A549 (cell line): ENCODE measurements at regions of chr1 and their contacts with region 1.

Region 1: GRCh38 chr1:231357831-231358354 is 19.8 kb downstream of the SPRTN start:
- DNase-seq: peak; percentile 52 to 73
- ATAC-seq: peak; percentile 85 to 86
- H3K4me3 ChIP-seq: no peak overlapping the region
- H3K27ac ChIP-seq: peak overlapping the region; percentile 37 to 69; a peak in 5 of 6 replicates
- H3K4me1 ChIP-seq: peaks cover 38% of the 10 kb centered on the region
- CTCF ChIP-seq: peak; percentile 92
- EP300 ChIP-seq: no peak
- POLR2A ChIP-seq: no peak
- RAD21 ChIP-seq: peak; percentile 95 to 96

Region 2: GRCh38 chr1:231134624-231135023 is 223.3 kb before region 1 on chr1:
- CTCF ChIA-PET with region 1: no interaction called
- POLR2A ChIA-PET with region 1: no interaction called
- DNase-seq: peak in 1 of 2 experiments; percentile 27
- ATAC-seq: no peak
- H3K4me3 ChIP-seq: no peak overlapping the region
- H3K27ac ChIP-seq: peak overlapping the region; percentile 46 to 67; a peak in 5 of 6 replicates
- H3K4me1 ChIP-seq: peaks cover 29% of the 10 kb centered on the region
- CTCF ChIP-seq: no peak
- EP300 ChIP-seq: no peak
- POLR2A ChIP-seq: no peak
- RAD21 ChIP-seq: no peak

Region 3: DNA sequence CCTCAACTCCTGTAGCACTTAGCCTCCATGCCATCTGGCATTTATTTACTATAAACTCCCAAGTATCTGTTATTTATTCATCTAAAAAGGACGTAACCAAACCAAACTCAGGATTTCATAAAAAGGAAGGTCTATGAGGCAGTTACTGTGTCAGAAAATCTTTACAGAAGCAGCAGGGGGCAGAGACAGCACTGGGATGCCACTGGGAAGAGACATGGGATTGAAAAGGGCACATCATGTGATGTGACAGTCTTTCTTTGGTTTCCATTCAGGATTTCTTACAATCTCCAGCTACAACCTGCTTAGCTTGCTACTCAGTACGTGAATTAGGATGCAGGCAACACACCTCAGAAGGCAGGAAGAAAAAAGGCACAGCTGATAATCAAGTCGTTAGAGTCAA is 11.4 kb after region 1 on chr1:
- CTCF ChIA-PET with region 1: interaction called, 18 read pairs
- POLR2A ChIA-PET with region 1: no interaction called
- DNase-seq: no peak
- ATAC-seq: peak in 1 of 2 experiments; percentile 67; a peak in 3 of 6 replicates
- H3K4me3 ChIP-seq: no peak overlapping the region
- H3K27ac ChIP-seq: no peak overlapping the region
- H3K4me1 ChIP-seq: peaks cover 15% of the 10 kb centered on the region; the same call in 2 of the 3 replicates
- CTCF ChIP-seq: no peak
- EP300 ChIP-seq: no peak
- POLR2A ChIP-seq: no peak
- RAD21 ChIP-seq: peak; percentile 48 to 50; a peak in 4 of 5 replicates

Region 4: DNA sequence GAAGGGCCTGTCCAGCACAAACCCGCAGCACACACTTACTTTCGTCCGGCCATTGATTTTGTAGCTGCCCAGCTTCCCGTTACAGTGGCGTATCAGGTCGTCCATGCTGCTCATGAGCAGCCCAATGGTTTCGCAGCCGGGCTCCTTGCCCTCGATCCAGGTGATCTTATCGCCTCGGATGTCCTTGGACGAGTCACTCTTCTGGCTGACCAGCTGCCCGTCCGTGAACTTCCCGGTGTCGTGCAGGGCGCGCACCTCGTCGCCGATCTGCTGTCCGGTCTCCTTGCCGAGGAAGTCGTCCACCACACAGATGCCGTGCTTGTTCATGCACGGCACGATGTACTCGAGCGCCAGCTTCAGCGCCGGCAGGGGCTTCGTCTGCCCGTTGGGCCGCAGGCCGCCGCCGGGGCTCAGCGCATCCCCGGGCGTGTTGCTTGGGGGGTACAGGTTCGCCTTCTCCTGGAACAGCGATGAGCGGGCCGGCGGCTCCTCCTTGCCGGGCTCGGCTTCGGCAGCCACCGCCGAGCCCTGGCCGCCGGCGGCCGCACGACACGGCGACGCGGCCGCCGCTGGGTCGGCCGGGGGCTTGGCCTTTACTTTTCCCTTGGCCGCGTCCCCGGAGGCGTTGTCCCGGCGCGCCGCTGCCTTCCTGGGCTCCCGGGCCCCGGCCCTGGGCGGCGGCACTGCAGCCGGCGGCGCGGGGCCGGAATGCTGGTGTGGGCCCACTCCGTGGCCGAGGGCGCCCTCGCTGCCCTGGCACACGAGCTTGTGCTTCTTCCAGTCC is 63.3 kb after region 1 on chr1:
- CTCF ChIA-PET with region 1: interaction called, 14 read pairs
- POLR2A ChIA-PET with region 1: interaction called, 3 read pairs
- DNase-seq: peak in 1 of 2 experiments; percentile 52
- ATAC-seq: peak; percentile 8 to 22; a peak in 5 of 6 replicates
- H3K4me3 ChIP-seq: peak overlapping the region; percentile 80
- H3K27ac ChIP-seq: peak overlapping the region; percentile 87 to 99
- H3K4me1 ChIP-seq: peaks cover 28% of the 10 kb centered on the region
- CTCF ChIP-seq: no peak
- EP300 ChIP-seq: no peak
- POLR2A ChIP-seq: no peak
- RAD21 ChIP-seq: no peak

Region 5: GRCh38 chr1:231534703-231535159 is 176.8 kb after region 1 on chr1:
- CTCF ChIA-PET with region 1: interaction called, 11 read pairs
- POLR2A ChIA-PET with region 1: no interaction called
- DNase-seq: no peak
- ATAC-seq: no peak
- H3K4me3 ChIP-seq: no peak overlapping the region
- H3K27ac ChIP-seq: no peak overlapping the region
- H3K4me1 ChIP-seq: peaks cover 4% of the 10 kb centered on the region; the same call in 2 of the 3 replicates
- CTCF ChIP-seq: no peak
- EP300 ChIP-seq: no peak
- POLR2A ChIP-seq: no peak
- RAD21 ChIP-seq: no peak